Esophagus squamous epithelium (tissue), 5 donors: ENCODE measurements at regions of chr5 and their contacts with region 1.

Region 1: DNA sequence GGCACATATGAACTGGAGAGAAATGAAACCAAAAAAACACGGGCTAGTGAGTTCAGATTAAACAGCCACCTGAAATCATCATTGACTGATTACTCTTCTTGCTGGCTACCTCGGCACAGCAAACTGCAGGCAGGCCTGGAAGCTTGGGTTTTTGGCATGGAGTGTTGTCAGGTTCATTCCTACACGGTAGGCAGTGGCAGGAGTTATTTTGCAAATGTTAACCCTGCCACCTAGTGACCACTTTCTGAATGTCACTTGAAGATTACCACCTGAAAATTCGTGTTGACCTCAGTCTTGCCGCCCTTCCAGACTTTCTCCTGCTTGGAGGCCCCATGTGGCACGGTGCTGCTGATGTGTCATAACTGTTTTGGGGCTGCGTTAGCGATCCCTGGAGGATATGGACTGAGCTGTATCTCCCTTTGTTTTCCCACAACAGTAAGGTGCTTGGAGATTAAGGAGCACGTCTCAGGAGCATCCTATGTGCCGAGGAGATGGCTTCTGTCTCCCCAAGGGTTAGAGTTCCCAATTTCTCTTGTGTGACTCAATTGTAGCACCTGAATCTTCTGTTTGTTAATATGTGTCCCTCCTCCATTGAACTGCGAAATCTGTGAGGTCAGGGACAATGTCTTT is 12.7 kb upstream of the CD180 start:
- DNase-seq: no peak
- H3K4me3 ChIP-seq: no peak overlapping the region
- H3K27ac ChIP-seq: no peak overlapping the region
- H3K4me1 ChIP-seq: peaks cover 6 to 37% (median 13%) of the 10 kb centered on the region in 3 donors
- H3K27me3 ChIP-seq: no peaks in the 10 kb centered on the region
- CTCF ChIP-seq: peak; percentile 72 to 90 (median 84)
- POLR2A ChIP-seq: no peak

Region 2: GRCh38 chr5:67100301-67100700 is 109.0 kb before region 1 on chr5:
- intact Hi-C with region 1: no loop called
- DNase-seq: no peak
- H3K4me3 ChIP-seq: no peak overlapping the region
- H3K27ac ChIP-seq: no peak overlapping the region
- H3K4me1 ChIP-seq: peaks cover 2 to 16% (median 8%) of the 10 kb centered on the region in 3 donors
- H3K27me3 ChIP-seq: no peaks in the 10 kb centered on the region
- CTCF ChIP-seq: no peak
- POLR2A ChIP-seq: no peak

Region 3: GRCh38 chr5:67161002-67161401 is 48.3 kb before region 1 on chr5:
- intact Hi-C with region 1: loop called (anchors 5 kb)
- DNase-seq: no peak
- H3K4me3 ChIP-seq: no peak overlapping the region
- H3K27ac ChIP-seq: peak overlapping the region; percentile 18 to 75 (median 48)
- H3K4me1 ChIP-seq: peaks cover 9 to 52% (median 17%) of the 10 kb centered on the region in 3 donors
- H3K27me3 ChIP-seq: no peaks in the 10 kb centered on the region
- CTCF ChIP-seq: no peak
- POLR2A ChIP-seq: no peak

Region 4: GRCh38 chr5:67301285-67301903 is 92.1 kb after region 1 on chr5:
- intact Hi-C with region 1: no loop called
- DNase-seq: peak; percentile 3
- H3K4me3 ChIP-seq: no peak overlapping the region
- H3K27ac ChIP-seq: peak overlapping the region; percentile 57 to 89 (median 86)
- H3K4me1 ChIP-seq: peaks cover 13 to 52% (median 33%) of the 10 kb centered on the region in 3 donors
- H3K27me3 ChIP-seq: no peaks in the 10 kb centered on the region
- CTCF ChIP-seq: no peak
- POLR2A ChIP-seq: no peak